PC-9 (cell line): ENCODE measurements at regions of chr2 and their contacts with region 1.

Region 1: DNA sequence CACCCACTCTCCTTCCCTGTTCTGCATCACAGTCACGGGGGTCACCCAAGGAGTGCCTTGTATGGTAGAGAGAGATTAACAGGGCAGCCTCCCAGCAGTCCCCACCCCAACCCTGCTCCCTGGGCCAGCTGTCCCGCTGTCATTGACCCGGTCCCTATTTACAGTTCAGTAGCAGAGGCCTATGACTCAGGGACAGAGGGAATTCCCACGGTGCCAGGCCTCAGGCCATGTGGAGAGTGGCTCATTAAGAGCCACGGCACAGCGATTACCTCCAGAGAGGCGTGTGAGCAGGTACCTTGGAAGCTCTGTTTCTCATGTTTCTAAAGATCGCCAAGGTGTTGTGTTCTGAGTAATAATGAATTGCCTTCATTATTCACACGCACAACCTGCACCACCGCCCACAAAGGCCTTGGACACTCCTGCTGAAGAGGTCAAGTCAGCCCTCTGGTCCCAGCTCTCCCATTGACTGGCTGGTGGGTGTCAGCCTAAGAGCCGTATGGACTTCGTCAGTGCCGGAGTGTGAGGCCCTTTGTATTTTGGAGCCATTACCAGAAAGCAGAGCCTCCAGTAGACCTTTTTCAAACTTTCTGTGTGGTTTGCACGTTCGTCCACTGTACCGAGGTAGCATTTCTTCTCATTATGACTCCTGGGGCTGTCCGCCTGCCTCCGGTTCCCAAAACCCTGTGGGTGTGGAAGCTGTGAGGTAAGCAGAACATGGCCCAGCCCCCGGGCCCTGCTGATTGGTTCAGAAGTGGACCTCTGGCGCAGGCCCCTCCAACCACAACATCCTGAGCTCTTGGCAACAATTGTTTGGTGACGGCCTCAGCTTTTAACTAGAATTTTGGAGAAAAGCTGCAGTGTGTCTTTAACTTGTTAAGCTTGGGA is 47.0 kb downstream of the SERTAD2 start:
- DNase-seq: peak; percentile 80 to 98
- H3K4me3 ChIP-seq: no peak overlapping the region; the same call in 1 of the 2 replicates
- H3K27ac ChIP-seq: peak overlapping the region; percentile 92
- H3K4me1 ChIP-seq: peaks cover 43% of the 10 kb centered on the region
- H3K27me3 ChIP-seq: no peaks in the 10 kb centered on the region
- CTCF ChIP-seq: no peak

Region 2: GRCh38 chr2:64595397-64596160 is 11.1 kb before region 1 on chr2:
- CTCF ChIA-PET with region 1: interaction called, 17 read pairs
- POLR2A ChIA-PET with region 1: no interaction called
- intact Hi-C with region 1: no loop called
- DNase-seq: peak in 1 of 2 experiments; percentile 55
- H3K4me3 ChIP-seq: no peak overlapping the region
- H3K27ac ChIP-seq: 0 out of 2 replicates have a peak overlapping the region, but pooled peaks have one; percentile 44
- H3K4me1 ChIP-seq: peaks cover 32% of the 10 kb centered on the region
- H3K27me3 ChIP-seq: no peaks in the 10 kb centered on the region
- CTCF ChIP-seq: no peak; the same call in 1 of the 2 replicates

Region 3: DNA sequence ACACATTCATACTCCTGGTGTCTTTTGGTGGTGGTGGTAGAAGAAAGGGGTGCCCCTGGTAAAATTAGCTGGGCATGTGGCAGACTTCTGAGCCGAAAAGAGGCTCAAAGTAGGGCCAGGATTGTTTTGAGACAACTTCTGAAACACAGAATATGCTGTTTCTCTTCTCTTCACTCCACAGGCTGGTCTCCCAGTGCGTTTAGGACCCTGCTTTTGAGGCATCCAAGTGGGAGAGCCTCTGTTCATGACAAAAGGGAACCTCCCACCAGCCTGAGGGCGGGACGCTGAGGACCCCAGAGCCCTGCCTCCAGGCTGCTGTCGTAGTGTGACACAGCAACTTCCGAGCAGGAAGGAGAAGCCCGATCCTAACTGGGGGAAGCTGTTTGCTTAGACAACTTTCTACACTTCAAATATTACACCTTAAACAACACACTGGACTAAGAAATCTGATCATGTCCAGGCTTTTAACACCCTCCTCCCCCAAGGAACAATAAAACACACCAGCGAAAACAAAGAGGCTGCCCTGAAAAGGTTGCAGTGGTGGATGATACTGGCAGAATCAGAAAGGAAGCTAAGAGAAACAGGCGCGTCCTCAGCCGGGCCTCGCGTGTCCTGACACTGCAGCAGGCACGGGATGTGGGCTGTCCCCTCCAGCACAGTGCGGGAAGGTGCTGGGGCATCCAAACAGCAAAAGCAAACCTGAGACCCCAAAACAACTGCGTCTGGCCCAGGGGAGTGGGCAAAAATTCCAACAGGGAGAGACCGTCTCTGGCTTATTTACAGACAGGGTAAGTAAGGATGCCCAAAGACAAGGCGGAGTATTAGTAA is 37.7 kb after region 1 on chr2:
- CTCF ChIA-PET with region 1: interaction called, 12 read pairs
- POLR2A ChIA-PET with region 1: interaction called, 13 read pairs
- intact Hi-C with region 1: loop called (anchors 1 kb)
- DNase-seq: peak; percentile 83 to 85
- H3K4me3 ChIP-seq: peak overlapping the region; percentile 60
- H3K27ac ChIP-seq: peak overlapping the region; percentile 97
- H3K4me1 ChIP-seq: peaks cover 78% of the 10 kb centered on the region
- H3K27me3 ChIP-seq: no peaks in the 10 kb centered on the region
- CTCF ChIP-seq: no peak

Region 4: DNA sequence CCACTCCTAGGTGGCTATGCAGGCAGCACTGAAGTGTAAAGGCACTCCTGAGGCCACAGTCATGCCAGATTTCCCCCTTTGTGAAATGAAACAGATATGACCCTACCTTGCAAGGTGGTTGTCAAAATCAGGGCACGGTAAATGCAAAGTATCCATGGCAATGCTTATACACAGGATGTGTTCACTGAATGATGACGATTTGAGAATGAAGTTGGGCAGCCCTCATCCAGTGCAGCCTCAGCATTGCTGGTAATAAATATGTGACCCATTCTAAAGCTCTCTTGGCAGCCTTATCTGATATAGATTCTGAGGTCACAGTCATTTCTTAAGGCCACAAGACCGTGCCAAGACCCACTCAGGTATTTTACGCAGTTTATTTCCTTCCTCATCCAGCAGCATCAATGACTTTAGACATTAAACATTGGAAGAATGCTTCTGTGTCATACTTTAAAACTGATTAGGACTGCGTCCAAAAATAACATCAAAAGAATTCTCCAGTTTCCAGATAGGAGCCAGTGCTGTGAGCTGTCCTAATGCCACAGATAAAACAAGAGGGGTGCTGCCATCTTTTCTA is 172.5 kb after region 1 on chr2:
- CTCF ChIA-PET with region 1: no interaction called
- POLR2A ChIA-PET with region 1: interaction called, 3 read pairs
- intact Hi-C with region 1: loop called (anchors 1 kb)
- DNase-seq: peak; percentile 71 to 99
- H3K4me3 ChIP-seq: no peak overlapping the region
- H3K27ac ChIP-seq: peak overlapping the region; percentile 60
- H3K4me1 ChIP-seq: peaks cover 62% of the 10 kb centered on the region
- H3K27me3 ChIP-seq: no peaks in the 10 kb centered on the region
- CTCF ChIP-seq: no peak

Region 5: DNA sequence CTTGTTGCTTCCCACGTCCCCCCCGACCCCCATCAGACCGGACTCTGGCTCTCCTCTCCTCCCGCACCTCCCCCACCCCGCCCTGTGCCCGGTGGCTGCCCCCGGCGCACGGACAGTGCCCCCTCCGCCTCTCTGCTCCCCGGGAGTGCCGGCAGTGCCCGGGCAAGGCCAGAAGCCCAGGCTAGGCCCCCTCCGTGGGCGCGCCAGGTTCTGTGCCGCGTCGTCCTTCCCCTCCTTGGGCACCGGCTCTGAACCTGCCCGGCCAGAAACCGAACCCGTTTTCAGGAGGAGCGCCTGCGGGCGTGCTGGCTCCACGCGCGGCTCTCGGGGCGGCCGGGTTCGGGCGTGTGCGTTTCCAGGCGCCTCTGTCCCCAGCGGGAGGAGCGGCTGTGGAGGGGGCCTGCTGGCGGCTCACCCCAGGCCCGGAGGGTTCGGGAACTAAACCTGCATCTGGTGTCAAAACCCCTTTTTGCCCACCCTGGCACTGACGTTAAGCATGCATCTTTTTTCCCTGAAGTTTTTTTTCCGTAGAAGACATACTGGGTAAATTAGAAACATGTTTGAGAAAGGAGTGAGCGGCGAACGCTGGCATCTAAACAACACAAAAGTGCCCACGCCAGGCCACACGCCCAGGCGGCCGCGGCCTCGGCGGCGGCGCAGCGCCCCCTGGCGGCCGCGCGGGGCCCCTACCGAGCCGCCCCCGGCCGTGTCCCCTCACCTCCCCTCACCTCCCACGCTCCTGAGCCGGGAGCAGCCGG is 258.5 kb after region 1 on chr2:
- CTCF ChIA-PET with region 1: no interaction called
- POLR2A ChIA-PET with region 1: no interaction called
- intact Hi-C with region 1: loop called (anchors 2 kb)
- DNase-seq: peak; percentile 46 to 74
- H3K4me3 ChIP-seq: peak overlapping the region; percentile 89
- H3K27ac ChIP-seq: peak overlapping the region; percentile 74
- H3K4me1 ChIP-seq: peaks cover 39% of the 10 kb centered on the region
- H3K27me3 ChIP-seq: no peaks in the 10 kb centered on the region
- CTCF ChIP-seq: no peak; the same call in 1 of the 2 replicates